Brain microvascular endothelial cell (primary cell): ENCODE measurements at regions of chr1 and their contacts with region 1.

Region 1: DNA sequence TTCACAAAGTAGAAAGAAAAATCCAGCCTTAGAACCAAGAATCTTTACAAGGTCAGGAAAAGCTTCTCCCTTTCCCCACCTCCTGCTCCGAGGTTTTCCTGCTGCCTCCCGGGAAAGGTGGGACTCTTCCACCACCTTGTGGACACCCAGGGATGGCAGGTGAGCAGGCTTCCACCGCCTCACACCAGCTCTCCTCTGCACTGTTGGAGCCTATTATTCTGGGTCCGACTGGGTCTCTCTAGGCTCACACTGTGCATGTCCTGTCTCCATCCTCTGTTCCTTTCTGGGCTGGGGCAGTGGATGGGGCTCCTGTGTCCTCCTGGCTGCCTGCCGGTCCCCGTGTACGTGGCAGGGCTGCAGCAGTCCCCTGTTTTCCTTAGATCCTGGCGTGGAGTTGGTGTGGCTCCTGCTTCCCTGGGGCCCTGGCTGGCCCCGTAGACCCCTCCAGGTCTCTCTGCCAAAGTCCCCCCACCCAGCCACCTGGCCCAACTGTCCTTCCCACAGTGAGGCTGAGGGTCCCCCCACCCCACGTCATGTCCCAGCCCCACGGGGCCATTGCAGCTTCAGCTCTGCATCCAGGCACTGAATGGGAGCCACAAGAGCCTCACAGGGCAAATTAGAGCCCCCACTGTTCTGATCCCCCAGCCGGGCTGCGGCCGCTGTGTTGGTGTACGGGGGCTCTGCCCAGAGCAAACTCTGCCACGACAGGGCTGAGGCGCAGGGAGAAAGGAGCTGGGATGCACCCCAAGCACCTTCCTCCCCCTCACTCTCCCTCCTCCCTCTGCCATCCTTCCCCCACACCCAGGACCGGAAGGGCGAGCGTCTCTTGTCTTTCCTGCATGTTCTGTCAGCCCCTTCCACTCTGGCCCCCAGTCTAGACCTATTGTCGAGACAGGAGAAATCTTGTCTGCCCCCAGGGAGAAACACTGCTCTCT is 3.3 kb upstream of the SLC45A1 start:
- DNase-seq: peak; percentile 77
- H3K4me3 ChIP-seq: no peak overlapping the region
- H3K27ac ChIP-seq: no peak overlapping the region
- H3K27me3 ChIP-seq: no peaks in the 10 kb centered on the region
- CTCF ChIP-seq: peak; percentile 98

Region 2: DNA sequence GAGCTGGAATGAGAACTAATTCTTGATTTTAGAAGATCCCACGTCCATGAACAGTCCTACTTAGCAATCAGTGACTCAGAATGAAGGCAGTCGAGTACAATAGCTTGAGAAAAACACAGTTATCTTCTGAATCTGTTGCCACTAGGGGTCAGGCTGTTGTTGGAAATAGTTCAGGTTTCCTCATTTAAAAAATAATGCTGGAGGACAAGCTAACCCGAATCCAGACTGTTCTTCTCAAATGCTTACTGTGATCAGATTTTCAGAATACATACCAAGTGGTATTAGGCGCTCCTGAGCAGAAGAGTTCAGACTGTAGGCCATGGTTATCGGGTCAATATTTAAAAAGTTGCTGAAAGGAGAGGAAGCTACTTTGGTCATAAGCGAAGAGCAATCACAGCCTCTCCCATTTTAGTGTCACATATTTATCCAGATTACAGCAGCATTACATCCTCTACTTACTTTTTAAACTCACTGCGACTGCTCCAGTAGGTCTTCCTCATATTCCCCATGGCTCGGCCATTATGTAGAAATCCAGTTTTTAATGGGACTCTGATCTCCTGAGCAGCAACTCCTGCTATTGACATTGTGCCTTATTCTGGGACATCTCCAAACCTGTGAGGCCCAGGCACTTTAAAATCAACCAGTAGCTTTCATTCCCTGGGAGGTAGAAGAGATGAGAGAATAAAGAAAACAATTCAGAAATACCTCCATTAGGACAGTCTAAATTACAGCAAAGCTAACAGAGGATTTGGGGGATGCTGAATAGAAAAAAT is 299.4 kb before region 1 on chr1:
- in situ Hi-C with region 1: loop called (anchors 25 kb)
- DNase-seq: peak; percentile 82
- H3K4me3 ChIP-seq: no peak overlapping the region
- H3K27ac ChIP-seq: peak overlapping the region; percentile 55
- H3K27me3 ChIP-seq: no peaks in the 10 kb centered on the region
- CTCF ChIP-seq: peak; percentile 58

Region 3: GRCh38 chr1:8121261-8122170 is 193.1 kb before region 1 on chr1:
- in situ Hi-C with region 1: loop called (anchors 25 kb)
- DNase-seq: peak; percentile 71
- H3K4me3 ChIP-seq: no peak overlapping the region
- H3K27ac ChIP-seq: peak overlapping the region; percentile 86
- H3K27me3 ChIP-seq: no peaks in the 10 kb centered on the region
- CTCF ChIP-seq: no peak

Region 4: DNA sequence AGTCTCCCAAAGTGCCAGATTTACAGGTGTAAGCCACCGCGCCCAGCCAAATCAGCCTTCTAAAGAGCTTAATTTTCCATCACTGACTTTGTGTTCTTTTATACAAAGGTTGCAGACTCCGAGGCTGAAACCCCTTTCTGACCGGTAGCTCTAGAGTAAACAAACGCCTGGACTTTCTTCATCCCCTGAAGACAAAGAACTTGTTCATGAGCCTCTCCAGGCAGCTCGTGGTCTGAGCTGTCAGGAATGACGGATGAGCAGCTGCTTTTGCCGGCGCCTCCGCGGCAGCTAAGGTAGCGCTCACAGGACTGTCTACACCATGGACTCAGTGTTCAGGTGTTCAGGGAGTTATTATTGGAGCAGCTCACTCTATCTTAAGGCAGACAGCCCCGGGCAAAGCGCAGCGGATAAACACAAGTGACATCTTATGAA is 160.0 kb before region 1 on chr1:
- in situ Hi-C with region 1: no loop called
- DNase-seq: no peak
- H3K4me3 ChIP-seq: no peak overlapping the region
- H3K27ac ChIP-seq: no peak overlapping the region
- H3K27me3 ChIP-seq: no peaks in the 10 kb centered on the region
- CTCF ChIP-seq: no peak

Region 5: GRCh38 chr1:9181176-9181906 is 866.7 kb after region 1 on chr1:
- in situ Hi-C with region 1: no loop called
- DNase-seq: no peak
- H3K4me3 ChIP-seq: peak overlapping the region; percentile 69
- H3K27ac ChIP-seq: peak overlapping the region; percentile 85
- H3K27me3 ChIP-seq: no peaks in the 10 kb centered on the region
- CTCF ChIP-seq: peak; percentile 97